Activated naive CD4-positive, alpha-beta T cell treated with anti-CD3 and anti-CD28 coated beads for 36 hours (primary cell): ENCODE measurements at regions of chr3 and their contacts with region 1.

Region 1: GRCh38 chr3:151838583-151839312 is 24.8 kb downstream of the AADAC start:
- DNase-seq: peak; percentile 53
- H3K4me3 Mint-ChIP-seq: no peak overlapping the region
- H3K27ac Mint-ChIP-seq: no peak overlapping the region
- H3K4me1 Mint-ChIP-seq: peaks cover 2% of the 10 kb centered on the region
- H3K27me3 Mint-ChIP-seq: no peaks in the 10 kb centered on the region

Region 2: DNA sequence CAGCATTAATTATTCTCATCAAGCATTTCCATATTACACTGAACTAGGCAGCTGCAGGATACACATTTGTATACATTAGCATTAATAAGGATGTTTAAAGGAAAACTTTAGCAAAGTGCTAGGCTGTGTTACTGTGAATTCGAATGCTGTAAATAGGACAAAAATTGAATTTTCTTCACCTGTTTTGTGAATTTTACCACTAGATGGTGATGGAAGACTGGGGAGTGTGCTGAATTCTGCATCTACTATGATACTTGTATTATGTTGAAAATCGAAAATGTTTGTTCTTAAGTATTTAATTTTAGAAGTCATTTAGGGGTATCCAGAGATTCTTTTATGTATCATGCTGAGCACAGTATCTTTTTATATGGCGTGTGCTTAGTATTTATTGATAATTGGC is 548.1 kb before region 1 on chr3:
- CTCF ChIA-PET with region 1: interaction called, 3 read pairs
- intact Hi-C with region 1: loop called (anchors 1 kb)
- DNase-seq: no peak
- H3K4me3 Mint-ChIP-seq: no peak overlapping the region
- H3K27ac Mint-ChIP-seq: no peak overlapping the region
- H3K4me1 Mint-ChIP-seq: peaks cover 2% of the 10 kb centered on the region
- H3K27me3 Mint-ChIP-seq: peaks cover 2% of the 10 kb centered on the region

Region 3: DNA sequence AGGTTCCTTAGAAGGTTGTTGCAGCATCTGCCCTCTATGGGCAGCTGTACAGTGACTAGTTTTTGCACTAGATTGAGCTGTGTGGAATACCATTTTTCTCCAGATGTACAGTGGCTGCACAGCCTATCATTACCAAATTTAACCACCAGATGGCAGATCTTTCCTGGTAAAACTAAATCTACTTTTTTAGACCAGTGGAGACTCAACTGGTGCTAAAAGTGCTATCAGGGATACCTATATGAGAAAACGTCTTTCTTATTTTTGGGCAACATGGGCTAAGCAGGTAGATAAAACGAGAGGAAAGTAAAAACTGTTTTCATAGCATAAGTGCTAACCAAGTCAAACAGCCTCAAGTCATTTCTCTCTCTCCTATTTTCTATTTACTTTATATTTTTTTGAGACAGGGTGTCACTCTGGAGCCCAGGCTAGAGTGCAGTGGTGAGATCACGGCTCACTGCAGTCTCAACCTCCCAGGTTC is 399.1 kb before region 1 on chr3:
- CTCF ChIA-PET with region 1: interaction called, 27 read pairs
- intact Hi-C with region 1: loop called (anchors 1 kb)
- DNase-seq: no peak
- H3K4me3 Mint-ChIP-seq: no peak overlapping the region
- H3K27ac Mint-ChIP-seq: no peak overlapping the region
- H3K4me1 Mint-ChIP-seq: no peaks in the 10 kb centered on the region
- H3K27me3 Mint-ChIP-seq: peaks cover 2% of the 10 kb centered on the region

Region 4: DNA sequence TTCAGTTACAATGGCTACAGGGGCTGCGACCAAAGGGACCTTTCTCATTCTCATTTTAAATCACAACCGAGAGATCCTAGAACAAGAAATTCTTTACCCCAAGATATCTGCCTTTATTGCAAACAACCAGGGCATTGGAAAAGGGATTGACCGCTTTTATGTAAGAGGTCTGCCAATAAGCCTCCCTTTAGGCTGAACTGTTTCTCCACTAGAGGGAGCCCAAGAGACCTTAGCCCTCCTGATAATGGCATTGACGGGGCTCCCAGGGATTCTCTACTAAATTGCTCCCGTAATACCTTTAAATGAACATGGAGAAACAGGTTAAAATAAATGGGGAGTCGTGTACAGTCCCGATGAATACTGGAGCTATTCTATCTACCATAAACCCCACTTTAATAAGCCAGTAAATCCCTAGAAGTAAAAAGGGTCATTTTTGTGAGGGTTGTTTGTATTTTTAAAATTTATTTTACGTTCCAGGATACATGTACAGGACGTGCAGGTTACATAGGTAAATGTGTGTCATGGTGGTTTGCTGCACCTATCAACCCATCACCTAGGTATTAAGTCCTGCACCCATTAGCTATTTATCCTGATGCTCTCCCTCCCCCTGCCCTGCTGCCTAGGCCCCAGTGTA is 370.3 kb before region 1 on chr3:
- CTCF ChIA-PET with region 1: interaction called, 32 read pairs
- intact Hi-C with region 1: loop called (anchors 1 kb)
- DNase-seq: peak; percentile 40
- H3K4me3 Mint-ChIP-seq: no peak overlapping the region
- H3K27ac Mint-ChIP-seq: no peak overlapping the region
- H3K4me1 Mint-ChIP-seq: no peaks in the 10 kb centered on the region
- H3K27me3 Mint-ChIP-seq: peaks cover 4% of the 10 kb centered on the region

Region 5: DNA sequence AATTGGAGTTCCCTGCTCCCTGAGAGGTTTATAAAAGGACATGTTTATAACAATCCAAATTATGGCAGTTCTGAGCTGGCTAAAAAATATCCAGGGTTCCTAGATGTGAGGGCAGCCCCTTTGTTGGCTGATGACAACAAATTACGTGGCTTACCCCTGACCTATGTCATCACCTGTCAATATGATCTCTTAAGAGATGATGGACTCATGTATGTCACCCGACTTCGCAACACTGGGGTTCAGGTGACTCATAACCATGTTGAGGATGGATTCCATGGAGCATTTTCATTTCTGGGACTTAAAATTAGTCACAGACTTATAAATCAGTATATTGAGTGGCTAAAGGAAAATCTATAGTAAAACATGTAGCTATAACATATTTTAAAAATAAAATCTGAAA is 10.9 kb before region 1 on chr3:
- CTCF ChIA-PET with region 1: interaction called, 10 read pairs
- intact Hi-C with region 1: no loop called
- DNase-seq: no peak
- H3K4me3 Mint-ChIP-seq: no peak overlapping the region
- H3K27ac Mint-ChIP-seq: no peak overlapping the region
- H3K4me1 Mint-ChIP-seq: no peaks in the 10 kb centered on the region
- H3K27me3 Mint-ChIP-seq: no peaks in the 10 kb centered on the region